Natural killer cell (primary cell): ENCODE measurements at regions of chr17 and their contacts with region 1.

Region 1: GRCh38 chr17:7234083-7234951 is at the start of gene DVL2:
- DNase-seq: peak; percentile 92 to 97
- ATAC-seq: peak; percentile 55 to 77 (median 73)
- H3K4me3 ChIP-seq: peak within 1 kb of the TSS; percentile 90
- H3K4me3 Mint-ChIP-seq: peak within 1 kb of the TSS; percentile 88
- H3K27ac ChIP-seq: peak within 1 kb of the TSS; percentile 63
- H3K27ac Mint-ChIP-seq: peak within 1 kb of the TSS; percentile 92 to 97
- H3K4me1 ChIP-seq: peaks cover 37% of the 10 kb centered on the region
- H3K4me1 Mint-ChIP-seq: peaks cover 40 to 69% of the 10 kb centered on the region in 2 donors
- H3K27me3 ChIP-seq: no peaks in the 10 kb centered on the region
- H3K27me3 Mint-ChIP-seq: no peaks in the 10 kb centered on the region
- CTCF ChIP-seq: no peak
- total RNA-seq, gene DVL2: 46.5 to 66.6 (median 61.5) TPM

Region 2: GRCh38 chr17:7186241-7186640 is 48.1 kb before region 1 on chr17:
- intact Hi-C with region 1: no loop called
- DNase-seq: no peak
- ATAC-seq: peak in 1 of 3 donors; percentile 32
- H3K4me3 ChIP-seq: no peak overlapping the region
- H3K4me3 Mint-ChIP-seq: no peak overlapping the region
- H3K27ac ChIP-seq: no peak overlapping the region
- H3K27ac Mint-ChIP-seq: no peak overlapping the region
- H3K4me1 ChIP-seq: no peaks in the 10 kb centered on the region
- H3K4me1 Mint-ChIP-seq: peaks cover 0 to 5% of the 10 kb centered on the region in 2 donors
- H3K27me3 ChIP-seq: no peaks in the 10 kb centered on the region
- H3K27me3 Mint-ChIP-seq: no peaks in the 10 kb centered on the region
- CTCF ChIP-seq: no peak

Region 3: GRCh38 chr17:7204336-7204735 is 30.0 kb before region 1 on chr17:
- intact Hi-C with region 1: no loop called
- DNase-seq: peak in 1 of 2 donors; percentile 46
- ATAC-seq: peak; percentile 32 to 65 (median 39)
- H3K4me3 ChIP-seq: peak overlapping the region; percentile 57
- H3K4me3 Mint-ChIP-seq: peak overlapping the region; percentile 93
- H3K27ac ChIP-seq: peak overlapping the region; percentile 96
- H3K27ac Mint-ChIP-seq: peak overlapping the region; percentile 93 to 95
- H3K4me1 ChIP-seq: peaks cover 24% of the 10 kb centered on the region
- H3K4me1 Mint-ChIP-seq: peaks cover 27 to 34% of the 10 kb centered on the region in 2 donors
- H3K27me3 ChIP-seq: no peaks in the 10 kb centered on the region
- H3K27me3 Mint-ChIP-seq: no peaks in the 10 kb centered on the region
- CTCF ChIP-seq: no peak

Region 4: GRCh38 chr17:7214300-7215135 is 19.8 kb before region 1 on chr17:
- intact Hi-C with region 1: loop called (anchors 2 kb)
- DNase-seq: peak; percentile 97 to 98
- ATAC-seq: peak; percentile 86 to 97 (median 87)
- H3K4me3 ChIP-seq: peak overlapping the region; percentile 34
- H3K4me3 Mint-ChIP-seq: peak overlapping the region; percentile 89
- H3K27ac ChIP-seq: peak overlapping the region; percentile 67
- H3K27ac Mint-ChIP-seq: peak overlapping the region; percentile 87 to 99
- H3K4me1 ChIP-seq: peaks cover 41% of the 10 kb centered on the region
- H3K4me1 Mint-ChIP-seq: peaks cover 18 to 48% of the 10 kb centered on the region in 2 donors
- H3K27me3 ChIP-seq: no peaks in the 10 kb centered on the region
- H3K27me3 Mint-ChIP-seq: peaks cover 7 to 16% of the 10 kb centered on the region in 2 donors
- CTCF ChIP-seq: peak; percentile 18

Region 5: DNA sequence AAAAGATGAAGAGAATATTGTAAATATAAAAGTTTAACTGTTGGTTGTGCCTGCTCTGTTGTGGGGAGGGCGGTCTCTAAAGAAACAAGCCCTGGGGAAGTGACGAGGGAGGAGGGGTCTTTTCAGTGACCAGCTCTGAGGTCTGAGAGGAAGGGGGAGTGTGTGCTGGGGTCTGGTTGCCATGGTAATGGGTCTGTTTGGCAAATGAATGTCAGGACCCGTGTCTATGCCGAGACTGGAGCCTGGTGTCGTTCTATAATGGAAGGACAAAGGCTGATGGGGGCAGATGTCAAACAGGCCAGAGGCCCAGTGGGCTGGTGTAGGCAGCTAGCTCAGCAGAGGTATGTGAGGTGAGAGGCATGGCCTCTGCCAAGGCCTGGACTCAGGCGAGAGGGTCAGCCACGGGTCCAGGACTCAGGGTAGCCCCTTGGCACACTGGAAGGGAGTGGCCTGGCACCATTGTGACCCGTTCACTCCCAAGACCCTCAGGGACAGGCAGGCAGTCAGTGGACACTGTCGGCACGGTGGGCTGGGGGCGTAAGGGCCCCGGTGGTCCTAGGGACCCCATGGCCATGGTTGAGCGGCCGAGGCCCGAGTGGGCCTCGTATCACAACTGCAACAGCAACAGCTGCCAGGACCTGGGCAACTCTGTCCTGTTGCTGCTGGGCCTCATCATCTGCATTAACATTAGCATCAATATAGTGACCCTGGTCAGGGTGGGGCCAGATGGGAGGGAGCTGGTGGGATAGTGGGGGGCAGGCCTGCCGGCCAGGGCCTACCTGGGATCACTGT is 185.7 kb after region 1 on chr17 and contains the start of gene SPEM1:
- intact Hi-C with region 1: no loop called
- DNase-seq: no peak
- ATAC-seq: no peak
- H3K4me3 ChIP-seq: no peak within 1 kb of the TSS
- H3K4me3 Mint-ChIP-seq: no peak within 1 kb of the TSS
- H3K27ac ChIP-seq: no peak within 1 kb of the TSS
- H3K27ac Mint-ChIP-seq: no peak within 1 kb of the TSS
- H3K4me1 ChIP-seq: no peaks in the 10 kb centered on the region
- H3K4me1 Mint-ChIP-seq: no peaks in the 10 kb centered on the region
- H3K27me3 ChIP-seq: no peaks in the 10 kb centered on the region
- H3K27me3 Mint-ChIP-seq: no peaks in the 10 kb centered on the region
- CTCF ChIP-seq: no peak
- total RNA-seq, gene SPEM1: not detected